ENCODE measurements at regions of chr19 and their contacts with region 1.

Region 1: DNA sequence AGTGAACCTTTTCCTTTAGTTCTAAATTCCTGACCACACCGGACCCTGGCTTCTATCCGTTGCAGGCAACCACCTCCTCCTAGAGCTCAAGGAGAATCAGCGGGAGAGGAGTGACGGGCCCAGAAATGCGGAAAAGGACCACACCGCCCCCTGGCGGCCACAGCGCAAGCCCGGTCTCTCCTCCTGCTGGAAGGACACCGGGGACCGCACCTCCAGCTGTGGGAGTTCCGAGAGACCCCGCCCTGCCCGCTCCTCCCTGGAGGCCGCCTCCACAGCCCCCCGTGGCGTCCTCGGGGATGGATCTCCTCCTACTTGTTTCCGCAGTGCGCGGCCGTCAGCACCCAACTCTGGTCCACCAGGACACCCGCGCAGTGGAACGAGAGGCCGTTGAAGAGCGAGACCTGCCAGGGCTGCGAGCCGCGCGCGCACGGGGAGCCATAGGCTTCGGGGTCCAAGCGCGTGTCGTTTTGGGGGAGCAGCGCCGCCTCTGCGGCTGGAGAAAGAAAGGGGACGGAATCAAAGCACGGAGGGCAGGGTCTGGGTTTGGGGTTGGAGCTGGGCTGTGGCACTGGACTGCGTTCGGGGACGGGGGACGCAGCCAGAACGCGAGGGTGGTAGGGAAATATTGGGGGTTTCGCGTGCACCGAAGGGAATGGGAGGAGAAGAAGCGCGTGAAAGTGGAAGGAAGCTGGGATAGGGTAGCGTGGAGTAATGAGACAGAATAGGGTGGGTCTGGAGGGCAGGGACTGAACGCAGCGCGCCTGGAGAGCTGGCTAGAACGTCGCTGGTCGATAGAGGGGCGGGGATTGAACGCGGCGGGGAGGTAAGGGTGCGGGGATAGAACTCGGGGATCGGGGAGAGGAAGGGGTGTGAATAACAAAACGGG is 2.5 kb downstream of the KLK10 start:
- DNase-seq: peak; percentile 81 to 83
- H3K4me3 ChIP-seq: peak overlapping the region in 2 of 3 donors; percentile 61 to 80
- H3K27ac ChIP-seq: peak overlapping the region; percentile 82 to 86
- H3K4me1 ChIP-seq: peaks cover 0 to 3% of the 10 kb centered on the region in 2 donors
- H3K27me3 ChIP-seq: peaks cover 0 to 9% of the 10 kb centered on the region in 2 donors
- CTCF ChIP-seq: peak; percentile 76 to 96 (median 78)
- POLR2A ChIP-seq: no peak

Region 2: GRCh38 chr19:49355909-49356353 is 1661.1 kb before region 1 on chr19:
- intact Hi-C with region 1: loop called (anchors 5 kb)
- DNase-seq: peak in 1 of 2 donors; percentile 47
- H3K4me3 ChIP-seq: peak overlapping the region in 1 of 3 donors; percentile 5
- H3K27ac ChIP-seq: peak overlapping the region; percentile 76 to 82
- H3K4me1 ChIP-seq: peaks cover 0 to 4% of the 10 kb centered on the region in 2 donors
- H3K27me3 ChIP-seq: no peaks in the 10 kb centered on the region
- CTCF ChIP-seq: no peak
- POLR2A ChIP-seq: no peak

Region 3: DNA sequence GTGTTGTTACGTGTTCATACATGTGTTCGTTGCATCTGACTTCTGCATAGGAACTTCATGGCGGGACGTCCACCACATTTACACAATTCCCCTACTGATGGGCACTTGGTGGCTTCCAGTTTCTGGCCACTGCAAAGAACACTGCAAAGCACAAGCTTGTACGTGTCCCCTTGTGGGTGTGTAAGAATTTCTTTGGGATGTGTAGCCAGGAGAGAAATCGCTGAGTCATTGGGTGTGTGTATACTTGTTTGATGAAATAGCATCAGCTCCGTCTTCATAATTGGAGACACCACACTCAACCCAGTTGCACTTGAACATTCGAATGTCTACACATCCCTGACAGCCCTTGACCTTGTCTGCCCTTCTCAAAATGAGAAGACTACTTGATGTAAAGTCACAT is 83.4 kb before region 1 on chr19:
- intact Hi-C with region 1: loop called (anchors 10 kb)
- DNase-seq: no peak
- H3K4me3 ChIP-seq: no peak overlapping the region
- H3K27ac ChIP-seq: peak overlapping the region in 1 of 2 donors; percentile 42
- H3K4me1 ChIP-seq: no peaks in the 10 kb centered on the region
- H3K27me3 ChIP-seq: peaks cover 0 to 4% of the 10 kb centered on the region in 2 donors
- CTCF ChIP-seq: no peak
- POLR2A ChIP-seq: no peak

Region 4: GRCh38 chr19:50994129-50994528 is 22.9 kb before region 1 on chr19:
- intact Hi-C with region 1: no loop called
- DNase-seq: no peak
- H3K4me3 ChIP-seq: no peak overlapping the region
- H3K27ac ChIP-seq: peak overlapping the region; percentile 14 to 63
- H3K4me1 ChIP-seq: no peaks in the 10 kb centered on the region
- H3K27me3 ChIP-seq: no peaks in the 10 kb centered on the region
- CTCF ChIP-seq: no peak
- POLR2A ChIP-seq: no peak

Region 5: GRCh38 chr19:51047031-51047335 is 29.9 kb after region 1 on chr19:
- intact Hi-C with region 1: no loop called
- DNase-seq: no peak
- H3K4me3 ChIP-seq: no peak overlapping the region
- H3K27ac ChIP-seq: peak overlapping the region; percentile 54 to 65
- H3K4me1 ChIP-seq: no peaks in the 10 kb centered on the region
- H3K27me3 ChIP-seq: no peaks in the 10 kb centered on the region
- CTCF ChIP-seq: no peak
- POLR2A ChIP-seq: no peak

Region 6: GRCh38 chr19:51098365-51099069 is 81.5 kb after region 1 on chr19:
- intact Hi-C with region 1: no loop called
- DNase-seq: no peak
- H3K4me3 ChIP-seq: peak overlapping the region in 1 of 3 donors; percentile 39
- H3K27ac ChIP-seq: no peak overlapping the region
- H3K4me1 ChIP-seq: no peaks in the 10 kb centered on the region
- H3K27me3 ChIP-seq: no peaks in the 10 kb centered on the region
- CTCF ChIP-seq: no peak
- POLR2A ChIP-seq: no peak

Measured in breast epithelium (tissue), 4 donors.